ENCODE measurements at regions of chr11 and their contacts with region 1.

Region 1: DNA sequence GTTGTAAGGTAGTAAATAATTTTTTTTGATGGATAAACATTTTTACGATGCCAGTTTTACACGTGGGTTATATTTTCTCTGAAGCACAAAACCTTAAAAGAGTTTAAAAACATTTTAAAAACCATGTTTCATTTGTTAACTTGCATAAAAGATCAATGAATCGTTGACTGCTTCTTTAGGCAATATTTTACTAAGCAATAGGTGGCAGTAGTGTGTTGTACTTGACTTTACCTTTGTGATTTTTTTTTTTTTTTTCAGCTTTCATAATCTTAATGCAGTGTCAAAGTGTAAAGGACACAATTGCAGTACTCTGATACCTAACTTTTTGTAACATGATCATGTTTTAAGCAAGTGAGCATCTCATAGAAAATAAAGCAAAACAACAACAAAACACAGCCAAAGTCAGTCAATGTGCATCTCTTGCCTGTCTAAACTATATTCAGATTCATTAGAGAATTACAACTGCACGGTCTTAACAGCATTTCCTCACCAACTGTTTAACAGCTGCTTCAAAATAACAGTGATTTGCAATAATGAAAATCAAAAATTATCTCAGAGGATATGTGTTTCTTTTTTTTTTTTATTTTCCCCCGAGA is 27.7 kb downstream of the DNAJC24 start:
- DNase-seq: peak; percentile 42
- H3K4me3 ChIP-seq: no peak overlapping the region
- H3K27ac ChIP-seq: no peak overlapping the region
- H3K4me1 ChIP-seq: no peaks in the 10 kb centered on the region
- CTCF ChIP-seq: peak; percentile 85

Region 2: GRCh38 chr11:31740131-31740530 is 342.8 kb after region 1 on chr11:
- CTCF ChIA-PET with region 1: no interaction called
- POLR2A ChIA-PET with region 1: no interaction called
- intact Hi-C with region 1: no loop called
- DNase-seq: no peak
- H3K4me3 ChIP-seq: no peak overlapping the region
- H3K27ac ChIP-seq: no peak overlapping the region
- H3K4me1 ChIP-seq: no peaks in the 10 kb centered on the region
- CTCF ChIP-seq: no peak

Region 3: DNA sequence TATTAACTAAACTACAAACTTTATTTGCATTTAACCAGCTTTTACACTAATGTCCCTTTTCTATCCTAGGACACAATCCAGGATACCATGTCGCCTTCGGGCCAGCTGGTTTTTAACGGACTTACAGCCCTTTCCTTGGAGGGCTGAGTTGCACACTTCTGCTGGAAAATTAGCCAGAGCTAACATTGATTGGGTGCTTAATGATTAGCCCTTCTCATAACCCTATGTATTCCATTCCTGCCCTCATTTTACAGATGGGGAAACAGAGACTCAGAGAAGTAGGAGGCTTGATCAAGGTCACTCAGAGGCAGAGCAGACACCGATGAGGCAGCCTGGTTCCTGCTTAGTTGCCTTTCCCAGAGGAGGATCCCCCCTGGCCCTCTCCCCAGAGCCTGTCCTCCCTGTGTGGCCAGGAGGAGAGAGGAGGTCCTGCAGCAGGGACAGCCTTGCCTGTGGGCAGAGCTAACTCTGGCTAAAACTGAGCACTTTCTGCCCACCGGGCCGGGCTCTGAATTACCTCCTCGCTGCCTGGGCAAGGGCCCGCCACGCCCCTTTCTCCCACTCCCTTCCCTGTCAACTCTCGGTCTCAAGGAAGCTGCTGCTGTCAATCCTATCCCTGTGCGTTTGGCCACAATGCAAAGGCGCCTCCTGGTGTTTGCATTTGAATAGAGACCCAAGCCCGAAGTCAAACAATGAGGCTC is 473.4 kb after region 1 on chr11:
- CTCF ChIA-PET with region 1: no interaction called
- POLR2A ChIA-PET with region 1: no interaction called
- intact Hi-C with region 1: loop called (anchors 2 kb)
- DNase-seq: no peak
- H3K4me3 ChIP-seq: no peak overlapping the region
- H3K27ac ChIP-seq: no peak overlapping the region
- H3K4me1 ChIP-seq: no peaks in the 10 kb centered on the region
- CTCF ChIP-seq: peak; percentile 61

Region 4: GRCh38 chr11:31958076-31958735 is 560.9 kb after region 1 on chr11:
- CTCF ChIA-PET with region 1: no interaction called
- POLR2A ChIA-PET with region 1: no interaction called
- intact Hi-C with region 1: loop called (anchors 2 kb)
- DNase-seq: peak; percentile 35
- H3K4me3 ChIP-seq: no peak overlapping the region
- H3K27ac ChIP-seq: no peak overlapping the region
- H3K4me1 ChIP-seq: no peaks in the 10 kb centered on the region
- CTCF ChIP-seq: peak; percentile 80

Region 5: GRCh38 chr11:32006799-32007388 is 609.6 kb after region 1 on chr11:
- CTCF ChIA-PET with region 1: no interaction called
- POLR2A ChIA-PET with region 1: interaction called, 3 read pairs
- intact Hi-C with region 1: loop called (anchors 10 kb)
- DNase-seq: peak; percentile 37
- H3K4me3 ChIP-seq: no peak overlapping the region
- H3K27ac ChIP-seq: no peak overlapping the region
- H3K4me1 ChIP-seq: no peaks in the 10 kb centered on the region
- CTCF ChIP-seq: peak; percentile 82

Region 6: DNA sequence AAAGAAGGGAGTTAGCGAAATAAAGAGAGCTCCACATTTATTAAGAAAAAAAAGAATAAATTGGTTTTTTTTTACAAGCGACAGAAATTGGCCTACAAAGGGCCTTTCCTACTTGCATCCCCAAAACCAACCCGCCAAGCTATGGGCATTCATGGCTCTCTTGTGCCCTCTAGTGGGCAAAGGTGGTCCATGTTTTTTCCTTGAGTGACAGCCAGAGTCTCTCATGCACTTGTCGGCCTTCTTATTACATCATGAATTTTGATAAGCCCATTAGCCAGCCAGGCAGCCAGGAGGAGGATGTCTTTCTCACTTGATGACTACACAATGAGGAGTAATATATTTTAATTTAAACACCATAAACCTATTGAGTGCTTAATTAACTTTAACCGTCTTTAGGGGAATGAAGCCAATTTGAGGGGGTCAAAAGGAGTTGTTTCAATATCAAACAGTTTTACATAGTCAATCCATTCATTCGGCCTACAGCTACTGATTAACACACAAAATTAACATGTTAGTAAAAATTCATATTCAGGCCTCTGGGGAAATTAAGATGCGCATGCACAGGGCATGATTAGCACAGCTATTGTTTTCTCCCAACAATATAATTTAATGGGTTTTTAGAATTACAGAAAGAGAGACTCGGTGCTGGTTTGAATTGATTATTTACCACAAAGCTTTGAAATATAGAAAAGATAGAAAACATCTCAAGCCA is 779.0 kb after region 1 on chr11:
- CTCF ChIA-PET with region 1: interaction called, 3 read pairs
- POLR2A ChIA-PET with region 1: interaction called, 5 read pairs
- intact Hi-C with region 1: loop called (anchors 5 kb)
- DNase-seq: peak; percentile 73
- H3K4me3 ChIP-seq: no peak overlapping the region
- H3K27ac ChIP-seq: no peak overlapping the region
- H3K4me1 ChIP-seq: no peaks in the 10 kb centered on the region
- CTCF ChIP-seq: peak; percentile 92